ENCODE measurements at regions of chr2 and their contacts with region 1.

Region 1: GRCh38 chr2:131488306-131489205 is 3.6 kb downstream of the MZT2A start:
- DNase-seq: peak in 2 of 10 donors; percentile 78 to 83

Region 2: DNA sequence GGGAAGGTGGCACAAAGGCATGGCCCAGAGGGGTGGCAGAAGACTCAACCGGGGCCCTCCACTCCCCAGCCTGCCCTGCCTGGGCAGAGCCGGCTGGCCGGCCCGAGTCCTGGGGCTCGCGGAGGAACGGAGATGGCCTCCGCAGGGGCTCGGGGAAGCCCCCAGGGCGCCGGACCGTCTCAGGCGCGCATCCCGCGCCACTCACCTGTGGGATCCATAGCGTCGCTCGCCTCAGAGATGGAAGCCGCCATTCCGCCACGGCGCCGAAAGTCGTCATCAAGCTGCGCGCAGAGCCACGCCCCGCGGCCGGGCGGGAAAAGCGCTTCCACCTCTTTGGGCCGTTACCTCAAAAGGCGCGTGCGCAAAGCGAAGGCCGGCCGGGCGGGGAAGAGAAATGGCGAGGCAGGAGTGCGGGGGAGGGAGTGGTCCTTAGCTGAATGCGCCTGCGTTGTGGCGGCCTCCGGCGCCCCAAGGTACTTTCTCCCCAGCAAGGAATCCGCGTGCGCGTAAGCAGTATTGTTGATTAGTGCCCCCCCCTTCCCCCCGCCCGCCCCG is 1307.2 kb before region 1 on chr2 and contains the start of gene SMPD4:
- intact Hi-C with region 1: loop called (anchors 10 kb)
- DNase-seq: peak; percentile 94 to 99 (median 96)

Region 3: DNA sequence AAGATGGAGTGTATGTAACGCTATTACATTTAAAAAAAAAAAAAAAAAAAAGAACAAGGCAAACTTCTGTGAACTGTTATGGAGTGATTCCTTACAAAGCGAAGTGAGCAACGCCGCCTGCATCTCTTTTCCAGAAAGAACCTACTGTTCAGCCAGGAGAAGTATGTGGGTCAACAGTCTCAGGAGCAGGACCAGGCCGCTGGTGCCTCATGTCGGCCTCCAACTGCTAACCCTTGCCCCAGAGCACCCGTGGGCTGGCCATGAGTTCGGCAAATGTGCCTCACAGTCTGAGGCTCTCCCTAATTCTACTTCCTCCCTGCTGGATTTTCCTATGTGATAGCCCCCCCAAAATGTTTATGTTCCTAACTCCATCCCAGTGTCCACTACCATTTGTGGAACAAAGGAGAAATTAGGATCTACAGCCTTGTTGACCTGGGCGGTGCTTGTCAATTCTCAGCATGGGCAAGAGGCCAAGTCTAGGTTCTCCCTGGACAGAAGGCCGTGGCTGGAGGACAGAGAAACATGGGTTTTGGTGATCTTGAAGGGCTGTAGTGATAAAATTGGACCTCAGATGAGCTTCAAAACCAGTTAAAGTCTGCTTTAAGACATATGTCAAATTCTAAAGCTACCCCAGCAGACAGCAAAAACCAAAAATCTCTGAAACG is 411.2 kb before region 1 on chr2:
- intact Hi-C with region 1: no loop called
- DNase-seq: no peak

Region 4: GRCh38 chr2:131682122-131682944 is 193.8 kb after region 1 on chr2:
- intact Hi-C with region 1: no loop called
- DNase-seq: peak; percentile 79 to 99 (median 86)

Measured in posterior cingulate gyrus (tissue), 11 donors.